Dendritic cell treated with granulocyte-macrophage colony-stimulating factor and Interleukin-4, amounts not matched to agents 40 ng/mL and 50 ng/mL, for 4 days (primary cell): ENCODE measurements at regions of chr7 and their contacts with region 1.

Region 1: DNA sequence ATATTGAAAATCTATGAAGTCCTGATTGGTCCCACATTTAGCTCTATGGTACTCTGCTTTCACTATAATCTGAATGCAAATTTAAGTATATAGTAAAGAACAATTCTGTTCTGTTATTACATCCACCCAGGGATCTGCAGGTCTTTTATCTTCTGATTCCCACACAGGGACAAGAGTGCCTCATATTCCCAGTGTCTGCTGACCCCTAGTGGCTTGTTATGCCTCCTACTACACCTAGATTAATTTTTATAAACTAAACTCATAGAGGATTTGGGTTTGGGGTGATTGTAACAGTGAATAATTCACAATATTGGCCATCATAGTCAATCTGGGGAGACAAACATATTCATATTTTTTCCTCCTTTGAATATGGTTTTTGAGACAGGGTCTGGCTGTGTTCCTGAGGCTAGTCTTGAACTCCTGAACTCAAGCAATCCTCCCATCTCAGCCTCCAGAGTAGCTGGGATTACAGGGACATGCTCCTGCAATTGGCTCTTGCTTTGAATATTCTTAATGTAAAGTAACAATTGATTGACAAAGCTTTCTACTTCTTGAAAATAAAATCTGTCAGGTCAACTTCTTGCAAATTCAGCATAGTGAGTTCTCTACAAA is 282.1 kb downstream of the KCND2 start:
- H3K4me3 Mint-ChIP-seq: no peak overlapping the region
- H3K27ac Mint-ChIP-seq: no peak overlapping the region
- H3K4me1 Mint-ChIP-seq: no peaks in the 10 kb centered on the region
- H3K27me3 Mint-ChIP-seq: no peaks in the 10 kb centered on the region

Region 2: GRCh38 chr7:119270045-119270464 is 1285.0 kb before region 1 on chr7:
- intact Hi-C with region 1: loop called (anchors 10 kb)
- H3K4me3 Mint-ChIP-seq: no peak overlapping the region
- H3K27ac Mint-ChIP-seq: no peak overlapping the region
- H3K4me1 Mint-ChIP-seq: no peaks in the 10 kb centered on the region
- H3K27me3 Mint-ChIP-seq: no peaks in the 10 kb centered on the region

Region 3: GRCh38 chr7:120617275-120617674 is 62.2 kb after region 1 on chr7:
- intact Hi-C with region 1: no loop called
- H3K4me3 Mint-ChIP-seq: no peak overlapping the region
- H3K27ac Mint-ChIP-seq: no peak overlapping the region
- H3K4me1 Mint-ChIP-seq: no peaks in the 10 kb centered on the region
- H3K27me3 Mint-ChIP-seq: no peaks in the 10 kb centered on the region